ENCODE measurements at regions of chr3 and their contacts with region 1.

Region 1: GRCh38 chr3:130430266-130430665 is 84.8 kb downstream of the COL6A5 start:
- DNase-seq: no peak
- ATAC-seq: no peak
- H3K4me3 ChIP-seq: no peak overlapping the region
- H3K27ac ChIP-seq: no peak overlapping the region
- H3K4me1 ChIP-seq: no peaks in the 10 kb centered on the region
- H3K27me3 ChIP-seq: peaks cover 7% of the 10 kb centered on the region
- CTCF ChIP-seq: no peak

Region 2: DNA sequence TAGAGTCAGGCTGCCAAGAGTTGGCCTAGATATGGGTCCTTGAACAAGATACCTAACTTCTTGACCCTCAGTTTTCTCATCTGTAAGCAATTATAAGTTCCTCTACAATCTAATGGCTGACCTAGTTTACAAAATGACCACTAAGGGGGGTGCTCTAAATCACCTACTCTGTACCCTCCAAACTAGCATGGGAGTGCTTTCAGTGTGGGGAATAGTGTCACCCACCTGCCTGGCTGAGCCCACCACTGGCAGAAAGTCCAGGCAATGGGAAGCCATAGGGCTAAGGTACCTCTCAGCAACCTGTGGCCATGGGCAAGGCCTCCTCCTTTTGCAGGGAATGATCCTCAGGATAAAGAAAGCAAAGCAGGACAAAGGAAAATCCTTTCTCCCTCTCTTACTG is 25.9 kb before region 1 on chr3:
- CTCF ChIA-PET with region 1: no interaction called
- POLR2A ChIA-PET with region 1: no interaction called
- in situ Hi-C with region 1: no loop called
- intact Hi-C with region 1: no loop called
- DNase-seq: no peak
- ATAC-seq: no peak
- H3K4me3 ChIP-seq: no peak overlapping the region
- H3K27ac ChIP-seq: no peak overlapping the region
- H3K4me1 ChIP-seq: no peaks in the 10 kb centered on the region
- H3K27me3 ChIP-seq: no peaks in the 10 kb centered on the region
- CTCF ChIP-seq: no peak

Region 3: DNA sequence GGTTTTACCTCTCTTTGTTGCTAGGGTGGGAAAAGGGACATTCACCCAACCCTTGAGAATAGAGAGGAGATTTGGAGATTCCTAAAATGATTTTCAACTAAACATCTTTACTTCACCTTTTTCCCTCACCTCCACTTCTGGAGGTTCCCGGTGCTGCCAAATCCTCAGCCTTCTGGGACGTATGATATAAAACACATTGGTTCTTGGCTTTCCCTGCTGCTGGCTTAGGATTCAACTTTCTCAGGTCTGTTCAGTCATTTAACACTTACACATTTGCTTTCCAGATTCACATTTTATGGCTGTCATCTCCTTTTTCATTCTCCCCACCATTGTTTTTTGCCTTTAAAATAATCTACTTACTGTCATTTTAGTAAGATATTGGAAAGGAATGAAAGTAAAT is 209.8 kb after region 1 on chr3:
- CTCF ChIA-PET with region 1: interaction called, 12 read pairs
- POLR2A ChIA-PET with region 1: no interaction called
- in situ Hi-C with region 1: no loop called
- intact Hi-C with region 1: no loop called
- DNase-seq: no peak
- ATAC-seq: no peak
- H3K4me3 ChIP-seq: no peak overlapping the region
- H3K27ac ChIP-seq: no peak overlapping the region
- H3K4me1 ChIP-seq: no peaks in the 10 kb centered on the region
- H3K27me3 ChIP-seq: peaks cover 4% of the 10 kb centered on the region
- CTCF ChIP-seq: no peak